ENCODE measurements at regions of chr20 and their contacts with region 1.

Region 1: DNA sequence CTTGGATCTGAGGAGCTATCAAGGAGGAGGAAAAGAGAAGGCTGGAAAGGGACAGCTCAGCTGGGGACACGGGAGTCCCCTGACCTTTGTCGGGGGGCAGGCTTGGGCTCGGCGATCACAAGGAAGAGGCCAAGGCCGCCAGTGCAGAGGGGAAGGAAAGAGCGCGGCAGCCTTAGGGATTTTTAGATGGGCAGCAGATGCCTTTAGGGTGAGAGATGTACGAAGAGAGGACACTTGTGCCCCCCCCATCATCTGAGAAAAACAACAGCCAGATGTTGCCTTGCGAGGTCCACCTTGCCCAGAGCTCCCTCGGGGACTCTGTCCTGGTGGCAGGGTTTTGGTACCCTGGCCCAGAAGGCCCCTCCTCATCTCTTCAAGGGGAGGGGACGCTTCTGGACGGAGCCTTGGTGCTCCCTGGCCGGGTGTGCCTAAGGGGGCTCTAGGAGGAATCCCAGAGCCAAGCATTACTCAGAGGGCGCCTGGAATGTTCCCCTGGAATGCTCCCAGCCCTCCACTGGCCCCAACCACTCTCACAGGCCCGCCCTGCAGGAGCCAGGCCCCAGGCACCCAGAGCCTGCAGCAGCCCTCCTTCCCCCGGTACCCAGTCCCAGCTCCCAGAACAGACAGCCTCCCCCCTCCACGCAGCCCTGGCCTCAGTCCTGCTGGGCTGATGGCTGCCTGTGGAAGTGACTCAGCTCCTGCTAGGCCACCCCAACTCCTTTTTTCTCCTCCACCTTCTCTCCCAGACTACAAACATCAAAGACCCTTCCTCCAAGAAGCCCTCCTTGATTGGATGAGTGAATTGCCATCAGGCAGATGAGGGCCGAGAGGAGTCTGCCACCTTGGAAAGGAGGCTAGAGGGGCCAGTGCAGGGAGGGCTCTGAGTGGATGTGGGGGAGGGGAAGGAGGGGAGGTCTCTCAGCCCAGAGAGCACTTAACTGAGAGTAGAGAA is 1.8 kb downstream of the ADAM33 start:
- DNase-seq: no peak
- H3K4me3 ChIP-seq: no peak overlapping the region
- H3K4me1 ChIP-seq: peaks cover 13% of the 10 kb centered on the region
- H3K27me3 ChIP-seq: peaks cover 12% of the 10 kb centered on the region

Region 2: DNA sequence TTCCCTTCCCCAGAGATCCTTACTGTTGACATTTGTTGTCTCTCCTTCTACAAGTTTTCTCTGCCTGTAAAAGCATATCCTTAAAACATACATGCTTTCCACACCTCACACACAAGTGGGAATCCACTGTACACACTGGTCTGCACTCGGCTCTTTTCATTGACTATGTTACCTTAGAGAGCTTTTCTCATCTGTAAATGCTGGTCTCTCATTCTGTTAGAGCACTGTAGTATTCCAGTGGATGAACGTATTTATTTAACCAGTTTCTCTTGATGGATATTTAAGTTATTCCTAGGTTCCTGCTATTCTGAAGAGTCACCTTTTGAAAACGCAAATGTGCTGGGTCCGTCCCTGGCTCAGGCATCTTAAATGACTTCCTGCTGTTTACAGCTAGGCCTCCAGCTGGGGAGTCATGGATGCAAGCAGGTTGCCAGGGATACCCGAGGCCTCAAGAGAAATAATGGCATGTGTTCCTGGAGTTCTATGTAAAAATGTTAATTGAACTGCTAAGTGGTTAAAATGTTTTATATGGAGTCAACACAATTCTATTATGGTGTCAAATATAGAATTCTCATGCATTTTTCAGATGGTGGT is 1445.3 kb before region 1 on chr20:
- in situ Hi-C with region 1: no loop called
- DNase-seq: peak; percentile 29 to 46
- H3K4me3 ChIP-seq: no peak overlapping the region
- H3K4me1 ChIP-seq: peaks cover 8% of the 10 kb centered on the region
- H3K27me3 ChIP-seq: no peaks in the 10 kb centered on the region

Region 3: GRCh38 chr20:3543901-3544507 is 136.0 kb before region 1 on chr20:
- in situ Hi-C with region 1: no loop called
- DNase-seq: no peak
- H3K4me3 ChIP-seq: no peak overlapping the region
- H3K4me1 ChIP-seq: peaks cover 5% of the 10 kb centered on the region; the same call in 1 of the 2 replicates
- H3K27me3 ChIP-seq: no peaks in the 10 kb centered on the region

Region 4: DNA sequence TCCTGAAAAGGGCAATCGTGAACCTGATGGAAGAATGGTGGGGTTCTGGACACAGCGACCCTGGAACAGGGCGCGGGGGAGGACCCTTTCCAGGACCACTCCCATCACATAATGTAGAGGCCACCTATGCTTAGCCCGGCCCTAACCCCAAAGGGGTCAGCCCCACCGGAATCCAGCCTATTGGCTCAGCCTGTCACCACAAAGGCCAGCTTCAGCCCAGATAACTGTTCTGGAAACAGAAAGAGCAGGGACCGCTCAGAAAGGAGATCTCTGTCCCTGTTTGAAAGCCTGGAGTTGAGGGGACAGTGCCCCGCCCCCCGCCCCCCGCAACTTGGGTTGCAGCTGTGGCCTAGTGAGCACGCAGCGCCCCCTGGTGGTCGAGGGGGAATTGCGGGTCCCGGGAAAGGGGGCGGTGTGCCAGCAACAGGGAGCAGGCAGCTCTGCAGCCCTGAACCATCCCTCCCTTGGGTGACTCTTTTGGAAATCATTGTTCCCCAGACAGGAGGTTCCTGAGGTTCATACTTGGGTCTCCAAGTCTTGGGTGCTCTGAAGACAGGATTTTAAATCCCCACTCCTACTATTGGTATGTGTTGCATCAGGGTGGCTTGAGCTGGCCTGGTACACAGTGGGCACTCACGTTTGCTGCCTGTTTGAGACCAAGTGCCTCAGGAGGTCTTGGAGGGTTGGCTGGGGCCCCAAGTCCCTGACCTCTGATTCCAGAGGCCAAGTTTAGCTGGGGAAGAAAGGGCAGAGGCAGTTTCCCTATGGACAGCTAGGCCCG is 30.9 kb after region 1 on chr20:
- in situ Hi-C with region 1: loop called (anchors 5 kb)
- DNase-seq: peak in 1 of 2 experiments; percentile 86
- H3K4me3 ChIP-seq: no peak overlapping the region
- H3K4me1 ChIP-seq: no peaks in the 10 kb centered on the region
- H3K27me3 ChIP-seq: no peaks in the 10 kb centered on the region

Region 5: DNA sequence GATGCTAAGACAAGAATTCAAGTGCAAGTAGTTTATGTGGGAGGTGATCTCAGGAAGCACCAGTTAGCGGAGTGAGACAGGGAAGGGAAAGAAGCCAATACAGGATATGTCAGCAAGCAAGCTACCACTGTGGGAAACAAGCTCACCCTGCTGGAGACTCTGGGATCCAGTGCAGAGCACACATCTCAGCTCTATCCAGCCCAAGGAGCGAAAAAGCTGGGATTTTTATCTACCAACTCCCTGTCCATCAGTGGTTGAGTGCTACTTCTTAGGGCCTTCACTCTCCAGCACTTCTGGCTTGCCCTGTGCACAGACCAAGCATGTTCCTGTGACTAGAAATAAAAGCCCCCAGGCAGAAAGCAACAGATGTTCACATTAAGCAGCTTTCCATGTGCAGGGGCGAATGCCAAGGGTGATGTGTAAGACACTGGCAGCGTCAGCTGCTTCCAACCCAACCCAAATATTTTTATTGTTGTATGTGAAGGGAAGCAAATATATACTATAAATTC is 346.1 kb after region 1 on chr20:
- in situ Hi-C with region 1: no loop called
- DNase-seq: no peak
- H3K4me3 ChIP-seq: no peak overlapping the region
- H3K4me1 ChIP-seq: peaks cover 16% of the 10 kb centered on the region
- H3K27me3 ChIP-seq: peaks cover 16% of the 10 kb centered on the region